Calu3 (cell line): ENCODE measurements at regions of chr3 and their contacts with region 1.

Region 1: GRCh38 chr3:179642871-179643270 is 10.0 kb upstream of the USP13 start:
- DNase-seq: no peak
- H3K4me3 Mint-ChIP-seq: no peak overlapping the region
- H3K27ac Mint-ChIP-seq: no peak overlapping the region
- H3K4me1 Mint-ChIP-seq: peaks cover 20% of the 10 kb centered on the region
- H3K27me3 Mint-ChIP-seq: no peaks in the 10 kb centered on the region
- CTCF ChIP-seq: no peak

Region 2: GRCh38 chr3:179438841-179439240 is 204.0 kb before region 1 on chr3:
- CTCF ChIA-PET with region 1: no interaction called
- intact Hi-C with region 1: no loop called
- DNase-seq: no peak
- H3K4me3 Mint-ChIP-seq: no peak overlapping the region
- H3K27ac Mint-ChIP-seq: no peak overlapping the region
- H3K4me1 Mint-ChIP-seq: no peaks in the 10 kb centered on the region
- H3K27me3 Mint-ChIP-seq: no peaks in the 10 kb centered on the region
- CTCF ChIP-seq: no peak

Region 3: DNA sequence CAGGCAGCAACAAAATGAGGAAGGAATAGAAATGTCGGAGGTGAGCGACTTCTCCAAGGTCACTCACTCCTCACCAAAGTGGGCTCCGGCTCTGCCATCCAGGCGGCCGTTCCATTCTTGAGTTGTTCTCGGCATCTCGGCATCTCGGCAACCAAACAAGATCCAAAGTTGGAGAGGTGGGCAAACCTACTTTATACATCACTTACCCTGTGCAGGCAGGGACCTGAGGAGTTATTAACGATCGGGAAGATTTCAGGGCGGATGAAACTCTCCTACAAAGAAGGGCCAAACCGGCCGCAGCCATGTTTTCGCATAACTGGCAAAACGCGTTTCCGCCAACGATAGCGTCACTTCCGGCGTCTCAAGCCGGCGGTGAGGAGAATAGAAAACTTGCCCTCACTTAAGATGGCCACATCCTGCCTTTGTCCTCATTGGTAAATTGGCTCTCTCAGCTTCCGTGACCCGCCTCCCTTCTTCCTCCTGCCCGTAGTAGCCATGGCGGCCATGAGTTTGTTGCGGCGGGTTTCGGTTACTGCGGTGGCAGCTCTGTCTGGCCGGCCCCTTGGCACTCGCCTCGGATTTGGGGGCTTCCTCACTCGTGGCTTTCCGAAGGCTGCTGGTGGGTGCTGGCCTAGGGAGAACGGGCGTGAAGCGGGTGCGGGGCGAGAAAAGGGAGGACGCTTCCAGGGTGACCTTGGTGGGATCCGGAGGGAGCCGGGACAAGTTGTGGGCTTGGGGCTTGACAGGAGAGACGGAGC is 38.4 kb before region 1 on chr3 and contains the starts of genes MRPL47 and NDUFB5:
- CTCF ChIA-PET with region 1: interaction called, 6 read pairs
- intact Hi-C with region 1: loop called (anchors 2 kb)
- DNase-seq: peak; percentile 94
- H3K4me3 Mint-ChIP-seq: peak within 1 kb of the TSS; percentile 86
- H3K27ac Mint-ChIP-seq: peak within 1 kb of the TSS; percentile 94
- H3K4me1 Mint-ChIP-seq: peaks cover 8% of the 10 kb centered on the region
- H3K27me3 Mint-ChIP-seq: no peaks in the 10 kb centered on the region
- CTCF ChIP-seq: no peak
- total RNA-seq, gene MRPL47: 76.2 and 88.0 TPM in 2 replicates
- total RNA-seq, gene NDUFB5: 135 and 146 TPM in 2 replicates

Region 4: DNA sequence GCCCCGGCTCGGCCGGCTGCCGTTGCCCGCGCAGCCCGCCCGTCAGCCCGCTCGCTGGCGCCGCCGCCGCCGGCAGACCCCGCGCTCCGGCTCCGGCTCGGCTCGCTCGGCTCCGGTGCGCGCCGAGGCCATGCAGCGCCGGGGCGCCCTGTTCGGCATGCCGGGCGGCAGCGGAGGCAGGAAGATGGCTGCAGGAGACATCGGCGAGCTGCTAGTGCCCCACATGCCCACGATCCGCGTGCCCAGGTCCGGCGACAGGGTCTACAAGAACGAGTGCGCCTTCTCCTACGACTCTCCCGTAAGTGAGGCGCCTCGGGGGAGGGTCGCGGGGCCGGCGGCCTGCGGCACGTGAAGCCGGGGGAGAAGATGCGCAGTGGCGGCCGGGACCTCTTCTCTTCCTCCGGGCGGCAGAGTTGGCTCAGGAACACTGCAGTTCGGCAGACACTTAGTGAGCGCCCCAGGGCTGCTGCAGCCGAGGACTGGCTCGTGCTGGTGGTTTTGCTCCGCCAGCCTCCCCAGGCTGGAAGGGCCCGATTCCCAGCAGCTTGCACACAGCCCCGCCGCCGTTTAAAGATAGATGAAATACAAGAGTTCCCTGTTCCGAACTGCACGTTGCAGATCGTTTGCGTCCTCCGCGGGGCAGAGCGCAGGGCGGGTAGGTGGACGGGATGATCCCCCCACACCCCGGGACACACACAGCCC is 10.4 kb after region 1 on chr3:
- CTCF ChIA-PET with region 1: interaction called, 10 read pairs
- intact Hi-C with region 1: no loop called
- DNase-seq: peak; percentile 72
- H3K4me3 Mint-ChIP-seq: peak overlapping the region; percentile 84
- H3K27ac Mint-ChIP-seq: peak overlapping the region; percentile 61
- H3K4me1 Mint-ChIP-seq: peaks cover 40% of the 10 kb centered on the region
- H3K27me3 Mint-ChIP-seq: no peaks in the 10 kb centered on the region
- CTCF ChIP-seq: no peak